Vagina (tissue), 2 donors: ENCODE measurements at regions of chr20 and their contacts with region 1.

Region 1: GRCh38 chr20:11032611-11033010 is 358.8 kb upstream of the JAG1 start:
- DNase-seq: no peak
- H3K4me3 ChIP-seq: no peak overlapping the region
- H3K27ac ChIP-seq: no peak overlapping the region
- H3K4me1 ChIP-seq: no peaks in the 10 kb centered on the region
- H3K27me3 ChIP-seq: no peaks in the 10 kb centered on the region
- CTCF ChIP-seq: no peak
- POLR2A ChIP-seq: no peak

Region 2: GRCh38 chr20:11008444-11009033 is 24.1 kb before region 1 on chr20:
- intact Hi-C with region 1: loop called (anchors 2 kb)
- DNase-seq: no peak
- H3K4me3 ChIP-seq: no peak overlapping the region
- H3K27ac ChIP-seq: no peak overlapping the region
- H3K4me1 ChIP-seq: peaks cover 4% of the 10 kb centered on the region
- H3K27me3 ChIP-seq: no peaks in the 10 kb centered on the region
- CTCF ChIP-seq: no peak
- POLR2A ChIP-seq: no peak

Region 3: DNA sequence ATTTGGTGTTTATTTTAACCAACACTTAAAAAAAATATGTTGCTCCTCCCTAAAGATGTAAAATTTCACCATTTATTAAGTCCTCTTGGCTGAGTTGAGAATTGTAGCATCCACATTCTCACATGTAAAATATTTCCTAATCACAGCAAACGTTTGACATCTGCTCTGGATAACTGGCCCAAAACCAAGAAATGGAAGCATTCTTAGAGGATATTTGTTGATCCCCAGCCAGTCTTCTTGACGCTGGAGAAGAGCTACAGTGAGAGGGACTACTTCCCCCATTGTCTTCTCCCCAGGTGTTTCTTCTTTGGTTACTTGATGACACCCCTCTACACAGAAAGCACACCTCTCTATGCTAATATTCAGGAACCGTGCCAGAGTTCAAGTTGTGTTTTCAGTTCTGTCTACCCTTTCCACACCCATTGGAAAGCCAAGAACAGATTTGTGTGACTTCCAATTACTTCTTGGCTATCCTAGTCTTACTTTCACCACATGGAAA is 95.7 kb after region 1 on chr20:
- intact Hi-C with region 1: no loop called
- DNase-seq: no peak
- H3K4me3 ChIP-seq: no peak overlapping the region
- H3K27ac ChIP-seq: no peak overlapping the region
- H3K4me1 ChIP-seq: no peaks in the 10 kb centered on the region
- H3K27me3 ChIP-seq: no peaks in the 10 kb centered on the region
- CTCF ChIP-seq: no peak
- POLR2A ChIP-seq: no peak

Region 4: GRCh38 chr20:11235058-11235457 is 202.4 kb after region 1 on chr20:
- intact Hi-C with region 1: no loop called
- DNase-seq: no peak
- H3K4me3 ChIP-seq: no peak overlapping the region
- H3K27ac ChIP-seq: peak overlapping the region; percentile 14
- H3K4me1 ChIP-seq: peaks cover 18% of the 10 kb centered on the region
- H3K27me3 ChIP-seq: no peaks in the 10 kb centered on the region
- CTCF ChIP-seq: no peak
- POLR2A ChIP-seq: no peak